ENCODE measurements at regions of chr7 and their contacts with region 1.

Region 1: DNA sequence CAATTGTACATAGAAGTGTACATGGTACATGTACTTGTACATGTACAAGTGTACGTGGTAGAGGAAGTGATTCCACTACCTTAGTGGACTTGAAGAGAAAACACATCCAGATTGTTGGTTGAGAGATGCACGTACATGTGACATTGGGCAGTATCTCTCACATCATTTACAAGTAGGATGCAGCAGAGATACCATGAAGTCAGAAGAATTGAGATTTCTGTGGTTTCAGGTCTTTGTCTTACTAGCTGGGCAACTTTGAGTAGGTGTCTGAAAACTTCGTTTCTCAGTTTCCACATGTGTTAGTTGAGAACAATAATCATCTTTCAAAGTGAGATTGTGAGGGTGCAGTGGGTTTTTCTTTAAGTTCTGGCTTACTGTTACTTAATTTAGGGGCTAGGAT is 21.5 kb downstream of the CLDN12 start:
- DNase-seq: no peak
- H3K4me3 ChIP-seq: no peak overlapping the region
- H3K27ac ChIP-seq: no peak overlapping the region
- H3K4me1 ChIP-seq: no peaks in the 10 kb centered on the region
- H3K27me3 ChIP-seq: no peaks in the 10 kb centered on the region

Region 2: DNA sequence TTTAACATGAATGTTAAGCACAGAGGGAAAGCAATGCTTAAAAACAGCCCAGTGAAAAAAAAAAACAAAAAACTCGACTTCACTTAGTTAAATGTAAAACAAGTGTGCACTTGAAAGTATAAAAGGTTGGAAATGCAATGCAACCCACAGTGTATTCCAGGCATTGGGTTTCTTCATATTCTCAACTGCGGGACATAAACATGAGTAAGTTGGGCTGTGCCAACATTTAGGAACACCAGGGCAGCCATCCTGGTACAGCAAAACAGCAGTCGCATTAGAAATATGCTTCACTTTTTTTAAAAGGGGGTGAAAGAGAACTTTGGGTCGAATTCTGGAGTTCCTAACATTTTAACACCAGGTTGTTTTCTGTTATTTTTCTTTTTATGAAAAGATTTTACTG is 269.5 kb before region 1 on chr7:
- CTCF ChIA-PET with region 1: interaction called, 24 read pairs
- POLR2A ChIA-PET with region 1: no interaction called
- DNase-seq: no peak
- H3K4me3 ChIP-seq: no peak overlapping the region
- H3K27ac ChIP-seq: no peak overlapping the region
- H3K4me1 ChIP-seq: peaks cover 0 to 7% (median 6%) of the 10 kb centered on the region in 4 experiments
- H3K27me3 ChIP-seq: peaks cover 0 to 5% (median 0%) of the 10 kb centered on the region in 5 experiments

Region 3: GRCh38 chr7:90312745-90313144 is 112.0 kb before region 1 on chr7:
- CTCF ChIA-PET with region 1: interaction called, 50 read pairs
- POLR2A ChIA-PET with region 1: no interaction called
- DNase-seq: peak in 2 of 3 donors; percentile 41 to 46
- H3K4me3 ChIP-seq: no peak overlapping the region
- H3K27ac ChIP-seq: no peak overlapping the region
- H3K4me1 ChIP-seq: no peaks in the 10 kb centered on the region
- H3K27me3 ChIP-seq: peaks cover 2 to 11% (median 7%) of the 10 kb centered on the region in 5 experiments

Region 4: GRCh38 chr7:90412458-90413184 is 12.1 kb before region 1 on chr7:
- CTCF ChIA-PET with region 1: interaction called, 35 read pairs
- POLR2A ChIA-PET with region 1: no interaction called
- DNase-seq: peak in 2 of 3 donors; percentile 30 to 36
- H3K4me3 ChIP-seq: no peak overlapping the region
- H3K27ac ChIP-seq: no peak overlapping the region
- H3K4me1 ChIP-seq: no peaks in the 10 kb centered on the region
- H3K27me3 ChIP-seq: no peaks in the 10 kb centered on the region

Region 5: DNA sequence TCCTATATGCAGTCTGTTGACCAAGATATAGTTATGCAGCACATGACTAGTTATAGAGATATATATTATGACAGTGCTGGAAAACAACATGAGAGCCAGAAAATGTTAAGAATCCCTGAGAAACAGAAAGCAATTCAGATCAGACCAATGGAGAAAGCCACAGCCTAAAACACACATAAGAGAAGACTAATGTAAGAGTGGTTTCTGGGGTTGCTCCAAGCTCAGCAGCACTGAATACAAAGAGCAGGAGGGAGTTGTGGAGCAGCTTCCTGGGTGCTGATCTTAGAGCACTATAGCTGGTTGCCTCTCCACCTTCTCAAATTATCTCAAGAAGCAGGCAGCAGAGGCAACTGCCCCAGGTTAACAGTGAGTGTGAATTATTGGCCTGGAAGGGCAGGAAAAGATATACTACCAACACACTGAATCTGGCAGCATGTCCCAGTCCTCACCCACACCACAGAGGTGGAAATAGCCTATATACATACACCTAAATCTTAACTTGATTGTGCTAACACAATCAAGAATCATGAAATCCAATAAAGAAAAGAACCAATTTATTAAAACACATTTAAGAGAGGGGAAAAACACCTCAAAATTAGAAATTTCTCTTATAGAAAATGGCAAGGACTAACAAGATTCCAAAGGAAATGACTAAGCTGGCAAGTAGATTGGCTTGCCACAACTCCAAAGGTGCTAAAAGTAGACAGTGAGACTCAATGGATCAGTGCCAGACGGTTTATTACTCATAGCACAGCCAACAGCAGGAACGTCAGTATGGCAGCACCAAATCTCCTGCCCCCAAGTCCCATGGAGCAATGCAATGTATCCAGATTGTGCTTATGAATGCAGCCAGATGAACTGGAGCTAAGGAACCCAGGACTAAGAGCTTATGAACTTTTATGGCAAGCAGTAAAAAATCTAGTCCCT is 49.8 kb after region 1 on chr7:
- CTCF ChIA-PET with region 1: no interaction called
- POLR2A ChIA-PET with region 1: no interaction called
- DNase-seq: no peak
- H3K4me3 ChIP-seq: no peak overlapping the region
- H3K27ac ChIP-seq: no peak overlapping the region
- H3K4me1 ChIP-seq: no peaks in the 10 kb centered on the region
- H3K27me3 ChIP-seq: peaks cover 0 to 4% (median 0%) of the 10 kb centered on the region in 5 experiments